Activated CD4-positive, alpha-beta T cell treated with anti-CD3 and anti-CD28 coated beads, Interleukin-2, amount 10 ng/mL, durations not matched to agents 24 days and 14 days (primary cell): ENCODE measurements at regions of chr3 and their contacts with region 1.

Region 1: DNA sequence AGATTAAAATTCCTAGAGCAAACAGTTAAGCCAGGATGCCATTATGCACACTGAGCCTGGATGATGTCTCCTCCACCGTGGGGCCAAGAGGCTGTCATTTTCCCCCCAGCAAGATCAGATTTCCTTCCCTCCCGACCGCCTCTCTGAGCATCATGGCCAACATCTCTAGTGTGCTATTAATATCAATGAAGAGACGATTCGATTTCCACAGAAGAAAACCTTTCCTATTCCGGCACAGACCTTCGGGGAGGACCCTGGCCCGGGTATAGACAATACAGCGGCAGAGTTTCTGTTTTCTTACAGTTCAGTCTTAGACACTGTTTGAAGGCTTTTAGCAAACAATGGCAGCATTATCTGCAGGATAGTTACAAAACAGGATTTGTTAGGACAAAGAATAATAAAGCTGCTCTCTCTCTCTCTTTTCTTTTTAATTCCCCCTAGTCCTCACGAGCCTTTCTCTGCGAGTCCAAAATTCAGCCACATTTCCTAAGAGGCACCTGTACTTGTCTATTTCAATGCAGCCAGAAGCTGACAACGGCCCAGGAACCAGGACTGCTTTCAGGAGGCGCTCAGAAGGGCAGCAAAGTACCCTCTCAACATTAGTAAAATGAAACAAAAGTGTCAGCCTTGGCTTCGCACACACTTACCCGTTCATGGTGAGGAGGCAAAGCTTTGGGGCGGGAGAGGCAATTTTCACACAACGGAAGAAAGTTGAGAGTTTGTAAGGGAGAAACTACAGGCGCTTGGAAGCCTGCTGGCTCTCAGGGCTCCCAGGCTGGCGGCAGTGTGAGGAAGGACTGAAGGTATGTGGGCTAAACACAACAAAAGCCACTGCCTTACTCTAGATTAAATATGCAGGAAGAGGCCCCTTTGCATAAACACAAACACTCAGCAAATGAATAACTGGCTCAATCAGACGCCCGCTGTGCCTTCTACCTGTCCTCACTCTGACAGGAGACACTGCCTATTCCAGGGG is 278.0 kb downstream of the FOXP1 start:
- DNase-seq: peak; percentile 68
- H3K4me3 Mint-ChIP-seq: peak overlapping the region; percentile 84
- H3K27ac Mint-ChIP-seq: peak overlapping the region; percentile 78
- H3K4me1 Mint-ChIP-seq: peaks cover 62% of the 10 kb centered on the region
- H3K27me3 Mint-ChIP-seq: peaks cover 30% of the 10 kb centered on the region

Region 2: DNA sequence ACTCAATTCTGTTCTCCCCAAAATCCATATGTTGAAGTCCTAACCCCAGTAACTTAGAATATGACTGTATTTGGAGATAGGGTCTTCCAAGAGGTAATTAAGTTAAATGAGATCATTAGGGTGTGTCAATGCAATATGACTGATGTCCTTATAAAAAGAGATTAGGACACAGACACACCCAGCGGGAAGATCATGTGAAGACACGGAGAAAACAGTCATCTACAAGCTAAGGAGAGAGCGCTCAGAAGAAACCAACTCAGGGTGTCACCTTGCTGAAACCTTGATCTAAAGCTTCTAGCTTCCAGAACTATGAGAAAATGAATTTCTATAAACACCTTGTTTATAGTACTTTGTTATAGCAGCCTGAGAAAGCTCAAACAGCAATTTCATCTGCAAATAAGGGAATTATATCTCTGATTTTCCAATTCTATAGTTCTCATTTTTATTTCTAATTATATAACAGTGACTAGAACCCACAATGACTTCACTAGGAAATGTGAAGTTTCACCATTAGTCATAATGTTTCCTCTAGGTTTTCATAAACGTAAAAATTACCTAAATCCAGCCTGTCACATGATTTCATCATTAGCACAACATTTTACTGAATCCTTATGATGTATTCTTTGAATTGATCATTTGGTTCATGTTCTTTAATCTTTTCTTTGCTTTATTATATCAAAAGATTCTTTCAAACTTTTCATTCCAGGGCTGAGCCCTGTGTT is 533.9 kb before region 1 on chr3:
- intact Hi-C with region 1: loop called (anchors 5 kb)
- DNase-seq: no peak
- H3K4me3 Mint-ChIP-seq: no peak overlapping the region
- H3K27ac Mint-ChIP-seq: no peak overlapping the region
- H3K4me1 Mint-ChIP-seq: no peaks in the 10 kb centered on the region
- H3K27me3 Mint-ChIP-seq: peaks cover 29% of the 10 kb centered on the region

Region 3: DNA sequence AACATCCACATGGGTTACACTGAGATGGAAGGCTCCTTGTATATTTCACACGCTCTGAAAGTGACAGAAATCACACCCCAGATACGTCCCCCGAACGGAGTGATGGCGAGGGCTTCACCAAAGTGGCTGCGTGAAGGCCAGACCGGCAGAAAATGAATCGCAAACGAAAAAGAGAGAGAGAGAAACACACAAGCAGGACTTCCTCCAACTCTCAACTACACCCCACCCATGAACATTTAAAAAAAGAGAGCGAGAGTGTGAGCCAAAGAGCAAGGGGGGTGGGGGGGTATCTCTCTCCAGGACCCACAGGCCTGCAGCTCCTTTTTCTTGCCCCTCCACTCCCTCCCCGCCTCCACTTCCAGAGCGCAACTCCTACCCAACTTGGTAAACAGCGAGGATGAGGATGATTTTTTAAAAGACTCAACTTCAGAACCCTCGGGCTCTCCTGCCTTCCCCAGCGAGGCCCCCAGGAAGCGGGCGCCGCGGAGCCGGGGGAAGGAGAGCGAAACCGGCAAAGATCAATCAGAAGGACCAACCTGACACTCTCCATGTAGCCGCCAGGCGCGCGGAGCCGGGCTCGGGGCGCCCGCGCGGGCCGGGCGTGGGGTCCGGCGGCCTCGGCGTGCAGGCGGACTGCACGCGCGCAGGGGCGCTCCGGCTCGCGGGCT is 241.1 kb before region 1 on chr3:
- intact Hi-C with region 1: loop called (anchors 1 kb)
- DNase-seq: peak; percentile 92
- H3K4me3 Mint-ChIP-seq: no peak overlapping the region
- H3K27ac Mint-ChIP-seq: no peak overlapping the region
- H3K4me1 Mint-ChIP-seq: peaks cover 55% of the 10 kb centered on the region
- H3K27me3 Mint-ChIP-seq: no peaks in the 10 kb centered on the region

Region 4: DNA sequence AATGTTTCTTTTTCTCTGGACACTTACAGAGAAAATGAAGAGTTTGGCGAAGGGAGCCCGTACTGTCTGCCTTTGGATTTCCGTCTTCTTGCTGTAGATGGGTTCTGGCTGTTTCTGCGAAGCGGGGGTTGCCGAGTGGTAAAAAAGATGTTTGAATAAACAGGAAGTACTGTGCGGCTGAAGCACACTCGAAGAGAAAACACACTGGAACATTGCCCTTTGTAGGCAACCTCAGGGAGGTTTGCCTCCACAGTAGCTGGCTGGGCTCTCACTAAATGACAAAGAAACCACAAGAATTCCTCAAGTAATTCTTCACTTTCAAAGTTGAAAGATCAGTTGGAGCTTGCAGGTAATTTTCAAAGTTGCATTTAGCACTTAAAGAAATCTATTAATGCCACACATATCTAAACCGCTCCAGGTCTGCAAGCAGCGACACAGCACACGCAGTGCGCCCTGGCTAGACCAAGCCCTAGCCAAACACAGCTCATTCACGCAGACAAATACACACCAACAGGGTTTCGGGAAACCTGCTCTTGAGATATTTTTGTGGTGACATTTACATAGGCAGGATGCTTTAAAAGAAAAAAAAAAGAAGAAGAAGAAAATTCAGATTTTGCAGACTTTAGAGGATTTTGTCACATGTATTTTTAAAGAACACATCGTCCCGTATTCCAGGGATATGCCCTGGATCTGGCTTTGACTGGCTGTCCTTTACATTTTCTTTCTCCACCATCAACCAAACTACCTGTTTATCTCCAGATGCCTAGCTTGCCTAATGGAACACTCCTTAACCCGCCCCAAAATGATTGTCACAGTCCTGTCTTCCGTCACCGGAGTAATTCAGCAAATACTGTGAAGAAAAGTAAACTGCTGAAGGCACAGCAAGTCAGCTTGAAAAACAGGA is 174.8 kb before region 1 on chr3:
- intact Hi-C with region 1: loop called (anchors 1 kb)
- DNase-seq: peak; percentile 93
- H3K4me3 Mint-ChIP-seq: peak overlapping the region; percentile 96
- H3K27ac Mint-ChIP-seq: peak overlapping the region; percentile 98
- H3K4me1 Mint-ChIP-seq: peaks cover 55% of the 10 kb centered on the region
- H3K27me3 Mint-ChIP-seq: no peaks in the 10 kb centered on the region

Region 5: DNA sequence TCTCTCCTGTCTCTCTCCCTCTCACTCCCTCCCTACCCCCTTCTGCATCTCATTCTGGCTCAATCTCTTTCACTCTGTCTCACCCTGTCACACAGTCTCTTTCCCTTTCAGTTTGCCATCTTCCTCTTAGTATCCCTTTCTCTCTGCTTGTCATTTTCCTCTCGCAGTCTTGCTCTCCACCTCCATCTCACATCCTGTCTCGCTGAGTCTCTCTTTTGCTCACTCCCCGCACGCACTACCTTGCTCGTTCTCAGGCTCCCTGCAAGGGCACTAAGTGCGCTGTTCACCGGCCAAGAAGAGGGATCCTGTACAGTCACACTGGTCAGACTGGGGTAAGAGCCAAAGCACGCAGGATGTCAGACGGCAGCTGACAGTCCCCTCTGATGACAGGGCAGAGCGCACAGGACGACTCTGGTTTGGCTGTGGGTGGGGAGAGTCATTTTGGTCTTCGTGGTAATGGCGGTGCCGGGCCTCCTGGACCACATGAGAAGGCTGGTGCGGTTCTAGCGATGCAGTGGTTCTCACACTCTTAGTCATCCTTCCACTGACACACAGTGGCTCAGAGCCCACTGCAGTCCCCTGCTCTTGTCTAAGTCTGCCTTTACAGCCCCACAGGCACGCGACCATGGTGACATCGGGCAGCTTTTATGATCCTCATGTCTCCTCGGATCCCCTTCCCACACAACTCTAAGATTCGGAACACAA is 78.8 kb before region 1 on chr3:
- intact Hi-C with region 1: loop called (anchors 1 kb)
- DNase-seq: peak; percentile 94
- H3K4me3 Mint-ChIP-seq: peak overlapping the region; percentile 85
- H3K27ac Mint-ChIP-seq: peak overlapping the region; percentile 95
- H3K4me1 Mint-ChIP-seq: peaks cover 41% of the 10 kb centered on the region
- H3K27me3 Mint-ChIP-seq: peaks cover 35% of the 10 kb centered on the region

Region 6: DNA sequence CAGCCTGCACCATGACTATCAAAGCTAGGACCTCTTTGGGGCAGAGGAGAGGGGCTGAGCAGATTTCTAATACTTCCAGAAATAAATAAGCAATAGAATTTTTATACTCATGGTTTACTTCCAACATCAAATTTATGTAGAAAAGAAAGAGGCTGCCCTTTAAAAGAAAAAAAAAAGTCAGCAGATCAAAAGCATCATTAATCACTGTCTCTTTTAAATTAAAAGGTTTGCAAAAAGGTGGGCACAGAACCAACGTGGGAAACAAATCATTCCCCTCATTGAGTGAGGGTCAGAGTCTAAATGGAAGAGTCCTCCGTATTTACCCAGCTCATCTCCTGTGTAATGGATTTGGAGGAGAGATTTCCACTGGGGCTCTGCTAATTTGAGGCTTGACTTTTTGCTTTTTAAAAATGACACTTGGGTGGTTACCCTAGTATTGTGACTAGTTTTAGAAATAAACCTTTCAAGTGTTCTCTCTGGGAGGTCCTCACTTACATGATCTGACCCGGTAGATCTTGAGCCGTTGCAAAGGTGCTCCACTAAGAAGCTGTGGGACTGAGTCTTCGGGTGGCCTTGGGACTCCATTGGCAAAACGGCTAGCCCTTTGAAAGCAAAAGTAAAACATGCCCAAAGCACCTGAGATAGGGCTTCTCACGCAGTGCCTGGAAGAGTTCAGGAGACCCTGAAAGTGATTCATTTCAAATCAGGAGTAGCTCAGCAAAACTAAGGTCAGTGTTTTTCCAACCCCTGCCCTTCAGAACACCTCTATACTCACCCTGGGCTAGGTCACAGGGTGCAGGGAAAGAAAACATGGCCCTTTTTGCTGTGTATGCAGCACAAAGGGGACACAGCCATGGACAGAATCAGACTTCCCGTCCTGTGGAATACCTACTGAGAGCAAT is 42.9 kb before region 1 on chr3:
- intact Hi-C with region 1: no loop called
- DNase-seq: no peak
- H3K4me3 Mint-ChIP-seq: no peak overlapping the region
- H3K27ac Mint-ChIP-seq: no peak overlapping the region
- H3K4me1 Mint-ChIP-seq: peaks cover 31% of the 10 kb centered on the region
- H3K27me3 Mint-ChIP-seq: no peaks in the 10 kb centered on the region

Region 7: GRCh38 chr3:71495708-71496472 is 190.4 kb after region 1 on chr3:
- intact Hi-C with region 1: loop called (anchors 2 kb)
- DNase-seq: peak; percentile 77
- H3K4me3 Mint-ChIP-seq: peak overlapping the region; percentile 71
- H3K27ac Mint-ChIP-seq: peak overlapping the region; percentile 81
- H3K4me1 Mint-ChIP-seq: peaks cover 50% of the 10 kb centered on the region
- H3K27me3 Mint-ChIP-seq: peaks cover 4% of the 10 kb centered on the region